Activated CD4-positive, alpha-beta T cell treated with anti-CD3 and anti-CD28 coated beads for 36 hours (primary cell): ENCODE measurements at regions of chr19 and their contacts with region 1.

Region 1: GRCh38 chr19:49085020-49085867 is at the start of gene SNRNP70:
- DNase-seq: peak; percentile 99
- ATAC-seq: peak; percentile 99
- H3K4me3 Mint-ChIP-seq: peak within 1 kb of the TSS; percentile 98
- H3K27ac Mint-ChIP-seq: peak within 1 kb of the TSS; percentile 96
- H3K4me1 Mint-ChIP-seq: peaks cover 31% of the 10 kb centered on the region
- H3K27me3 Mint-ChIP-seq: peaks cover 2% of the 10 kb centered on the region
- total RNA-seq, gene SNRNP70: 225 to 306 TPM

Region 2: GRCh38 chr19:48618916-48619691 is 466.1 kb before region 1 on chr19 and contains the starts of genes RPL18 and SPHK2:
- CTCF ChIA-PET with region 1: no interaction called
- POLR2A ChIA-PET with region 1: no interaction called
- intact Hi-C with region 1: loop called in 1 of 2 experiments (anchors 1 kb)
- DNase-seq: peak; percentile 97
- ATAC-seq: peak; percentile 82
- H3K4me3 Mint-ChIP-seq: peak within 1 kb of the TSS; percentile 94
- H3K27ac Mint-ChIP-seq: peak within 1 kb of the TSS; percentile 97
- H3K4me1 Mint-ChIP-seq: peaks cover 48% of the 10 kb centered on the region
- H3K27me3 Mint-ChIP-seq: no peaks in the 10 kb centered on the region
- total RNA-seq, gene RPL18: 2,026 to 2,191 TPM
- total RNA-seq, gene SPHK2: 27.0 TPM

Region 3: GRCh38 chr19:48933382-48933932 is 151.8 kb before region 1 on chr19 and contains the start of gene DHDH:
- CTCF ChIA-PET with region 1: no interaction called
- POLR2A ChIA-PET with region 1: no interaction called
- intact Hi-C with region 1: no loop called
- DNase-seq: peak; percentile 90
- ATAC-seq: peak; percentile 92
- H3K4me3 Mint-ChIP-seq: peak within 1 kb of the TSS; percentile 74
- H3K27ac Mint-ChIP-seq: peak within 1 kb of the TSS; percentile 48
- H3K4me1 Mint-ChIP-seq: peaks cover 10% of the 10 kb centered on the region
- H3K27me3 Mint-ChIP-seq: peaks cover 2% of the 10 kb centered on the region
- total RNA-seq, gene DHDH: 1.4 to 2.4 TPM

Region 4: GRCh38 chr19:49042177-49042576 is 43.1 kb before region 1 on chr19:
- CTCF ChIA-PET with region 1: no interaction called
- POLR2A ChIA-PET with region 1: no interaction called
- intact Hi-C with region 1: loop called in 1 of 2 experiments (anchors 1 kb)
- DNase-seq: no peak
- ATAC-seq: no peak
- H3K4me3 Mint-ChIP-seq: no peak overlapping the region
- H3K27ac Mint-ChIP-seq: no peak overlapping the region
- H3K4me1 Mint-ChIP-seq: no peaks in the 10 kb centered on the region
- H3K27me3 Mint-ChIP-seq: no peaks in the 10 kb centered on the region

Region 5: DNA sequence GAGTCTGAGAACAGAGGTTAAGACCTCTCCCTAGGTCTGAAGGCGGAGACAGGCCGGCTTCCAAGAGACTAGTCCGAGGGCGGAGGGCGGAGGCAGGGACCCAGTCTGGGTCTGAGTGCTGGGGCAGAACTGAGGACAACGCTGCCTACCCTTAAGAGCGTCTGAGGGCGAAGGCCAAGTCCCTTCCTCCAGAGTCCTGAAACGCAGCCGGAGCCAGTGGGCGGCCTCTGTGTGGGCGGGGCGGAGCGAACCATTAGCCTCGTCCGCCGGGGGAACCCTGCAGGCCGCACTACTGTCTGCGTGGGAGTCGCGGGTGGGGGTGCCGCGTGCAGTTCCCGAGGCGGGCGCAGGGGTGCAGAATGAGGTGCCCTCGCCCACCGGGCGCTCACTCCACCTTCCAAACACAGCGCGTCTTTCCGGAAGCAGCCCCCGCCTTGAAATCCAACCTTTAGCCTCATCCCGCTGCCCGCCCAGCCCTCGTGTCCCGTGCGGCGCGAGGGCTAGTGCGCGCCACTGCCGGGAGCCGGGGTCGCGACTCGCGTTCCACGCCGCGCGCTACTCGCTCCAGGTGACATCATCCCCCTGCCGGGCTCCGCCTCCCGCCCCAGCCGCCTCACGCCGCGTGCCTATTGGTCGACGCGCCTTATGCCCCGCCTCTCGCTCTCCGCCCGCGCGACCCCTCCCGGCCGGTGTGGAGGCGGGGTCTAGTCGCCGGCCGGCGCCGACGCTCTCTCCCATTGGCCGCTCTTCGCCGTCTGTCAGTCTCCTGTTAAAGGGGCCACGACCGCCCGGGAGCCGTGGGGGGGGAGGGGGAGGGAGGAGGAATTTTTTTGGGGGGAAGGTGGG is 33.5 kb after region 1 on chr19 and contains the start of gene C19orf73:
- CTCF ChIA-PET with region 1: interaction called, 9 read pairs
- POLR2A ChIA-PET with region 1: interaction called, 4 read pairs
- intact Hi-C with region 1: loop called (anchors 1 to 2 kb)
- DNase-seq: peak; percentile 98
- ATAC-seq: peak; percentile 85
- H3K4me3 Mint-ChIP-seq: peak within 1 kb of the TSS; percentile 80
- H3K27ac Mint-ChIP-seq: peak within 1 kb of the TSS; percentile 84
- H3K4me1 Mint-ChIP-seq: peaks cover 28% of the 10 kb centered on the region
- H3K27me3 Mint-ChIP-seq: peaks cover 8% of the 10 kb centered on the region
- total RNA-seq, gene C19orf73: 1.7 to 2.0 TPM

Region 6: DNA sequence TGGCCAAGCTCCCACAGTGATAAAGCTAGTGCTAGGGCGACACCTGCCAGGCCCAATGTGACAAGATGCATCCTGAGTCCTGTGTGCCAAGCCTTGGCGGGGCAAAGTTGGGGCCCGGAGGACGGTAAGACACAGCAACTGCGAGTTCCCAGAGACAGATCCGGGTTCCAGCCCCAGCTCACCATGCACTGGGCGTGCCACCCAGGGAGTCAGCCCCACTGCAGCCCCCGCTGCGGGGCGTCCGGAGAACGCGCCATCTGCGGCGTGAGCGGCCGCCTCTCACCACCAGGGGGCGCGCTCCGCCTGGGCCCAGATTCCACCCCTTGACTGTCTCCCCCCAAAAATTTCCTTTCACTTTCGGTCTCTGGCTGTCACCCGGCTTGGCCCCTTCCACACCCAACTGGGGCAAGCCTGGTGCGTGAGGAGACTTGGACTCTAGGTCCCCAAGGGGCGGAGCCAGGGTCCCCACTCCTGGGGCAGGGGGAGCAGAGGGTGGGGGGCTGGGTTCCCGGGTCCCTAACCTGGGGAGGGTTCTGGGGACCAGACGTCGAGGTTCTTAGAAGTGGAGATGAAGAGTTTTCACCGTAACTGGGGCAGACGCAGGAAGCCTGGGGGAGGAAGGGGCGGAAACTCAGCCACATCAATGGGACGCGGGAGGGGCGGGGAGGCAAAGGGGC is 388.8 kb after region 1 on chr19 and contains the start of gene FLT3LG:
- CTCF ChIA-PET with region 1: no interaction called
- POLR2A ChIA-PET with region 1: no interaction called
- intact Hi-C with region 1: loop called in 1 of 2 experiments (anchors 1 kb)
- DNase-seq: peak; percentile 94
- ATAC-seq: peak; percentile 47
- H3K4me3 Mint-ChIP-seq: peak within 1 kb of the TSS; percentile 73
- H3K27ac Mint-ChIP-seq: peak within 1 kb of the TSS; percentile 84
- H3K4me1 Mint-ChIP-seq: peaks cover 58% of the 10 kb centered on the region
- H3K27me3 Mint-ChIP-seq: no peaks in the 10 kb centered on the region
- total RNA-seq, gene FLT3LG: 38.6 to 43.2 TPM